ENCODE measurements at regions of chr20 and their contacts with region 1.

Region 1: DNA sequence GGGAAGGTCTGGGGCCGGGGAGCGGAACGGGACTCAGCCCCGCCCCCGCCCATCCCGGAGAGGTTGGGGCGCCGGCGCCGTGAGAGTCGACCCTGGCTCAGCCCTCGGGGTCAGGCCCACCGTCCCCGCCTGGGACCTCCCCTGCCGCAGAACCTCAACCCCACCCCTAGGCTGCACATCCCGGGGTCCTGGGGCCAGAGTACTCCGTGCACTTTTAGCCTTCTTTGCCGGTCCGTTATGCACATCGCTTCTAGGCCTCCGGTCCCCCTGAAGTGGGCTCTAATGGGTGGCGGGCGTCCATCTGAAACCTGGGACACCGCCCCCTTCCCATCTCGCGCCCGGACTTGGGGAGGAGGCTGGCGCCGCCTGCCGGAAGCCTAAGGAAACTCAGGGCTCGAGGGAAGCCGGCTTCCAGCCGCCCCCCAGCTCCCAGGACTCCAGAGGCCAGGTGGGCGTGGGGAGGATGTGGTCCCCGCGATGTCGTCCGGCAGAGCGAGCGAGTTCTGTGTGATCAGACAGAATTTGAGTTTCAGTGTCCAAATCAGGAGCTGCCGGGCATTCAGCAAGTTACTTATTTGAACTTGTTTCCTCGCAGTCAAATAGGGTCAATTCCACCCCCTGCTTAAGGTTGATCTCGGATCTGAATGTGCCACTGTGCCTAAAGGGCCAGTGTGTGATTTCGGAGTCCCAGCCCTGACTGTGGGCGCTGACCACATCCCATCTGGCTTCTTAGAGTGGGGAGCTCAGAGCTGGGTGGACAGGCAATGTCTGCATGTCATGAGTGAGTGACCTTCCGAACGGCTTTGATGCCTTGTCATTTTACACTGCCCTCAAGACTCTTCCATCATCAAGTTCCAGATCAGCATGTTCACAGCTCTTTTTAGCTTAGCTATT is 47.6 kb downstream of the CPXM1 start:
- DNase-seq: peak; percentile 44 to 71 (median 64)
- H3K4me3 ChIP-seq: peak overlapping the region; percentile 46
- H3K27ac ChIP-seq: peak overlapping the region; percentile 56 to 90
- H3K4me1 ChIP-seq: peaks cover 2% of the 10 kb centered on the region
- H3K27me3 ChIP-seq: no peaks in the 10 kb centered on the region
- CTCF ChIP-seq: peak; percentile 37 to 55 (median 53)
- EP300 ChIP-seq: no peak
- POLR2A ChIP-seq: no peak

Region 2: DNA sequence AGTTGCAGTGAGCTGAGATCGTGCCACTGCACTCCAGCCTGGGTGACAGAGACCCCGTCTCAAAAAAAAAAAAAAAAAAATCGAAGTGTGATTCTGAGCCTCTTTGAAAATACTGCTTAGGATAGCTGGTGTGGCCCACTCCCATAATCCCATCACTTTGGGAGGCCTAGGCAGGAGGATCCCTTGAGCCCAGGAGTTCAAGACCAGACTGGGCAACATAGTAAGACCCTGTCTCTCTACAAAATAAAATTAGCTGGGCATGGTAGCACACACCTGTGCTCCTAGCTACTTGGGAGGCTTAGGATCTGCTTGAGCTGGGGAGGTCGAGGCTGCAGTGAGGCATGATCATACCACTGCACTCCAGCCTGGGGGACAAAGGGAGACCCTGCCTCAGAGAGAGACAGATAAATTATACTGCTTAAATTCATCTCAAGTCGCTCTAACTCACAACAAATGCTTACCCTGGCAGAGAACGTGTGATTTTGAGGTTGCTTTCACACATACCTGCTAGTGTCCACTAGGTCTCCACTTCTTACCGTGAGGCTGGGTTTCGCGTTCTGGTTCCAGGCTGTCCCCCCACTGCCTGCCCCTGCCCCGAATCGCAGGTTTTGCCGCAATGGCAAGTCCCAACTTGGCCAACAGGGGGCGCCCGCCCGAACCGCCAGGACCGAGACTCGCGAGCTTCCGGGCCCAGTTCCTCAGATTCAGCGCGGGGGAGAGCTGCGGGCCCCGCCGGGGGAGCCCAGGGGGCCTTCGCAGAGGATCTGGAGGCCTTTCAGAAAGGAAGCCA is 228.7 kb before region 1 on chr20:
- intact Hi-C with region 1: loop called in 1 of 4 experiments (anchors 5 kb)
- DNase-seq: peak; percentile 85 to 93 (median 91)
- H3K4me3 ChIP-seq: peak overlapping the region; percentile 67
- H3K27ac ChIP-seq: peak overlapping the region; percentile 78 to 81
- H3K4me1 ChIP-seq: no peaks in the 10 kb centered on the region
- H3K27me3 ChIP-seq: no peaks in the 10 kb centered on the region
- CTCF ChIP-seq: peak; percentile 92 to 98 (median 93)
- EP300 ChIP-seq: no peak
- POLR2A ChIP-seq: peak; percentile 74

Region 3: DNA sequence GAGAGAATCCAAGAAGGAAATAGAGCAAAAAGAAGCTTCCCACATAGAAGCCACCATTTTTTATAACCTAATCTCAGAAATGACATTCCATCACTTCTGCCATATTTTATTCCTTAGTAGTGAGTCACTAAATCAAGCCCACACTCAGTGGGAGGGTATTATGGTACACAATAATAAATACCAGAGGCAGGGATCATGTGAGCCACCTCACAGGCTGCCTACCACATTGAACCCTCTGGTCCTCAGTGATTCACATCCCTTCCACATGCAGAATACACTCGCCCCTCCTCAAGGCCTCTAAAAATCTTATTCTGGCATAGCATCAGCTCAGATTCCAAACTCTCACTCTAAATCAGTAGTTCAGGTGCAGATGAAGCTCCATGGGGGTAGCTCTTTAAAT is 167.0 kb before region 1 on chr20:
- intact Hi-C with region 1: no loop called
- DNase-seq: no peak
- H3K4me3 ChIP-seq: no peak overlapping the region
- H3K27ac ChIP-seq: no peak overlapping the region
- H3K4me1 ChIP-seq: no peaks in the 10 kb centered on the region
- H3K27me3 ChIP-seq: no peaks in the 10 kb centered on the region
- CTCF ChIP-seq: no peak
- EP300 ChIP-seq: no peak
- POLR2A ChIP-seq: no peak

Region 4: DNA sequence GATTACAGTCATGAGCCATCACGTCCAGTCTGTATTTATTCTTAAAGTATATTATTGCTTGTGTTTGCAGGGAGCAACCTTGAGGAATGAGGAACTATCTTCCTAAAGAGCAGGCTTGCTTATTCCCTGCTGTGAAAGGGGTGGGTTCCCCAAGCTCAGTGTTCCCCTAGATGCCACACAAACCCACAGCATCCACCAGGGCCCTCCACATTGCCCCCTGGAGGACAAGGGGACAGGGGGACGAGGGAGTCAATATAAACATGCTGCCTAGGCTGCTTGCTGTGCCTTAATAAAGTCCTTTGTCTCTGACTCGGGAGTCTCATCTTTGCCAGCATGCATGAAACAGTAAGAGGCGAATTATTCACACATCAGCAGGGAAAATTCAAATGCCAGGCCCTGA is 80.8 kb before region 1 on chr20:
- intact Hi-C with region 1: no loop called
- DNase-seq: no peak
- H3K4me3 ChIP-seq: no peak overlapping the region
- H3K27ac ChIP-seq: no peak overlapping the region
- H3K4me1 ChIP-seq: no peaks in the 10 kb centered on the region
- H3K27me3 ChIP-seq: no peaks in the 10 kb centered on the region
- CTCF ChIP-seq: no peak
- EP300 ChIP-seq: no peak
- POLR2A ChIP-seq: no peak

Region 5: DNA sequence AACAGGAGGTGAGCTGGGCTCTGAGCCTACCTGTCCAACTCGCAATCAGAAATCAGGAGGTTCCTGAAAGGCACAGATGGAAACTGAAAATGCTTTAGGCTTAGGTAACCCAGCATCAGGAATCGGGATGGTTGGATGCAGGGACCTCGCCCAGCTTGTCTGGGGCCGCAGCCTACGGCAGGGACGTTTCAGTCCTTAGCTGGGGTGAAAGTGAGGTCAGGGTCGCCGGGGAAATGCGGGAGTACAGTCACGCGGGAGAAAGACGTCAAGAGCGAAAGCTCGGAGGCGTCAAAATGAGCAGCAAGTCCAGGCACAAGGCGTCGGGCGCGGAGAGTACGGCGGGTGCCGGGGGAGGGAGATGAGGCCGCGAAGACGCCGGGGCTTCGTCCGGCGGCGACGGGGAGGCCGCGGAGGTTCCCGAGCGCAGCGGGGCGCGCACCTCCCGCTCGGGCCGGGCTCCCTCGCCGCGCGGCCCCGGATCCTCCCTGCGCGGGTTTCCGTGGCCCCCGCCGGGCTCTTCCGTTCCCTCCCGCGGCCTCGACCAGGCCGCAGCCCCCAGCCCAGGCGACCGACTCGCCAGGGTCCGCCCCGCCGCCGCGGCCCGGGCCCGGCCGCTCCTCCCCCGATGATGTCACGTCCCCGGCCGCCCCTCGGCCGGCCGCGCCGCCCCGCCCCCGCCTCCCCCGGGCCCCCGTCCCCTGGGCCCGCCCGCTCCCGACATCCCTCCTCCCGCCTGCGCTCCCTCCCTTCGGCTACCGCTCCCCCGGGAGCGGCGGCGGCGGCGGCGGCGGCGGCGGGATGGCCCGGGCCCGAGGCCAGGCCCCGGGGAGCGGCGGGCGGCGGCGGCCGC is 60.6 kb before region 1 on chr20 and contains the start of gene EBF4:
- intact Hi-C with region 1: loop called in 3 of 4 experiments (anchors 5 kb)
- DNase-seq: peak; percentile 82 to 89 (median 86)
- H3K4me3 ChIP-seq: peak within 1 kb of the TSS; percentile 64
- H3K27ac ChIP-seq: peak within 1 kb of the TSS; percentile 100
- H3K4me1 ChIP-seq: no peaks in the 10 kb centered on the region
- H3K27me3 ChIP-seq: no peaks in the 10 kb centered on the region
- CTCF ChIP-seq: no peak
- EP300 ChIP-seq: no peak
- POLR2A ChIP-seq: peak; percentile 71
- total RNA-seq, gene EBF4: 17.6 to 67.7 (median 55.5) TPM

Region 6: GRCh38 chr20:2697768-2698167 is 55.0 kb before region 1 on chr20:
- intact Hi-C with region 1: loop called in 3 of 4 experiments (anchors 5 kb)
- DNase-seq: no peak
- H3K4me3 ChIP-seq: no peak overlapping the region
- H3K27ac ChIP-seq: no peak overlapping the region
- H3K4me1 ChIP-seq: no peaks in the 10 kb centered on the region
- H3K27me3 ChIP-seq: no peaks in the 10 kb centered on the region
- CTCF ChIP-seq: no peak
- EP300 ChIP-seq: no peak
- POLR2A ChIP-seq: no peak

Region 7: GRCh38 chr20:2804041-2804828 is 51.4 kb after region 1 on chr20:
- intact Hi-C with region 1: no loop called
- DNase-seq: no peak
- H3K4me3 ChIP-seq: no peak overlapping the region
- H3K27ac ChIP-seq: no peak overlapping the region
- H3K4me1 ChIP-seq: peaks cover 7% of the 10 kb centered on the region
- H3K27me3 ChIP-seq: no peaks in the 10 kb centered on the region
- CTCF ChIP-seq: no peak
- EP300 ChIP-seq: no peak
- POLR2A ChIP-seq: no peak

Region 8: DNA sequence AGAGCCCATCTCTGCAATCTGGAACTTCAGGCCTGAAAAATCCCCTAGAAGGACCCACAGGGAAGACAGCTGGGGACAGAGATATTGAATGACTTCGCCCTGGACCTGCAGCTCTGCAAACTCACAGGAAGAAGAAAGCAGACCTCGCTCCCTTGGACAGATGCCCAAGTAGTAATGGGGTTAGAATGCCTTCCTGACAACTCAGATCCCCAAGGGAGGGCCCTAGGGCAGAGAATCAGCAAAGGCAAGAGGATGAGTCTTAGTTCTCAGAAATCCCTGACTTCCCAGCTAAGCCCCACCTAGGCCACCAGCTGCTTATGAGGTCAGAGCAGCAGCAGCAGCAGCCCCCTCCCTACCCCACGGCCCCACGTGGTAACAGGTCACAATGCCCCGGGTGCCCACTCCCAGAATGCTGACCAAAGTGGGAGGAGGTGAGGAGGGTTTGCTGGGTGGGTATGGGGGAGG is 61.8 kb after region 1 on chr20 and contains the start of gene C20orf141:
- intact Hi-C with region 1: loop called in 1 of 4 experiments (anchors 10 kb)
- DNase-seq: peak in 3 of 5 donors; percentile 44 to 58 (median 52)
- H3K4me3 ChIP-seq: no peak within 1 kb of the TSS
- H3K27ac ChIP-seq: no peak within 1 kb of the TSS
- H3K4me1 ChIP-seq: peaks cover 27% of the 10 kb centered on the region
- H3K27me3 ChIP-seq: no peaks in the 10 kb centered on the region
- CTCF ChIP-seq: no peak
- EP300 ChIP-seq: no peak
- POLR2A ChIP-seq: no peak
- total RNA-seq, gene C20orf141: 0.69 TPM in 1 of 7 donors, not detected in the others

Region 9: GRCh38 chr20:2840138-2840966 is 87.5 kb after region 1 on chr20 and contains the starts of genes PCED1A and VPS16:
- intact Hi-C with region 1: loop called in 1 of 4 experiments (anchors 5 kb)
- DNase-seq: peak; percentile 83 to 93 (median 88)
- H3K4me3 ChIP-seq: peak within 1 kb of the TSS; percentile 99
- H3K27ac ChIP-seq: peak within 1 kb of the TSS; percentile 69 to 84
- H3K4me1 ChIP-seq: peaks cover 4% of the 10 kb centered on the region
- H3K27me3 ChIP-seq: no peaks in the 10 kb centered on the region
- CTCF ChIP-seq: peak in 1 of 3 donors; percentile 17
- EP300 ChIP-seq: no peak
- POLR2A ChIP-seq: peak; percentile 41
- total RNA-seq, gene PCED1A: 32.9 to 58.0 (median 39.1) TPM
- total RNA-seq, gene VPS16: 15.6 to 44.1 (median 31.4) TPM

Region 10: GRCh38 chr20:2851086-2851485 is 98.3 kb after region 1 on chr20:
- intact Hi-C with region 1: loop called in 1 of 4 experiments (anchors 5 kb)
- DNase-seq: no peak
- H3K4me3 ChIP-seq: no peak overlapping the region
- H3K27ac ChIP-seq: no peak overlapping the region
- H3K4me1 ChIP-seq: no peaks in the 10 kb centered on the region
- H3K27me3 ChIP-seq: no peaks in the 10 kb centered on the region
- CTCF ChIP-seq: no peak
- EP300 ChIP-seq: no peak
- POLR2A ChIP-seq: no peak

Region 11: DNA sequence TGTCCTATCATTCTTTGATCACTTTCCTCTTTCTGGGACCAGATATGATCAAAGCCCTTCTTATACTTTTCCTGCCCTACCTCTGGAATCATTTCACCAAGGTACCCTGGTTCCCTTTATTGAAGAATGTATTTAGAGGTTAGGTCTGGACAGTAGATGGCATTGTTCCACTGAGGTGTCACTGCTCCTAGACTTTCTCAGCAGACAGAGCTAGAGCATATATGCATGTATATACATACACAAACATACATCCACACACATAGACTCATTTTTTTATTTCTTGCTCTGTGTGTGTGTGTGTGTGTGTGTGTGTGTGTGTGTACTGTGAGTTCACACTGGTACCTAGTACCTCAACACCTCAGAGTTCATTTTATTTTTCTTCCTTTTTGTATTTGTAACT is 161.3 kb after region 1 on chr20:
- intact Hi-C with region 1: no loop called
- DNase-seq: no peak
- H3K4me3 ChIP-seq: no peak overlapping the region
- H3K27ac ChIP-seq: no peak overlapping the region
- H3K4me1 ChIP-seq: no peaks in the 10 kb centered on the region
- H3K27me3 ChIP-seq: no peaks in the 10 kb centered on the region
- CTCF ChIP-seq: no peak
- EP300 ChIP-seq: no peak
- POLR2A ChIP-seq: no peak

Measured in ovary (tissue), 10 donors.